Heart right ventricle (tissue), 16 donors: ENCODE measurements at regions of chr10 and their contacts with region 1.

Region 1: DNA sequence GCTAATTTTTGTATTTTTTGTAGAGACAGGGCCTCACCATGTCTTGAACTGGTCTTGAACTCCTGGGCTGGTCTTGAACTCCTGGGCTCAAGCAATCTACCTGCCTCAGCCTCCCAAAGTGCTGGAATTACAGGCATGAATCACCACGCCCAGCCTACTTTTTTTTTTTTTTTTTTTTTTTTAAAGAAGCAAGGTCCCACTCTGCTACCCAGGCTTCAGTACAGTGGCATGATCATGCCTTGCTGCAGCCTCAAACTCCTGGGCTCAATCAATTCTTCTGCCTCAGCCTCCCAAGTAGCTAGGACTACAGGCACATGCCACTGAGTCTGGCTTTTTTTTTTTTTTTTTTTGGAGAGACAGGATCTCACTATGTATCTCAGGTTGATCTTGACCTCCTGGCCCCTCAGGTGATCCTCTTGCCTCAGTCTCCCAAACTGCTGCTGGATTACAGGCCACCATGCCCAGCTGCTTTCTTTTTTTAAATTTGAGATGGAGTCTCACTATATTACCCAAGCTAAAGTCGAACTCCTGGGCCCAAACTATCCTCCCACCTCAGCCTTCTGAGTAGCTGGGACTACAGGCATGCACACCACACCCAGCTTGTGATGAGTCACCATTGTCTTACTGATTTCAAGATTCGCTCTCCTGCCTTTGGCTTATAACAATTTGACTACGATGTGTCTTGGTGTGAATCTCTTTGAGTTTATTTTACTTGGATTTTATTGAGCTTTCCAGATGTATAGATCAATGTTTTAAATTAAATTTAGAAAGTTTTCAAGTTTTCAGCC is 9.0 kb downstream of the RPEL1 start:
- DNase-seq: no peak
- ATAC-seq: no peak
- H3K4me3 ChIP-seq: no peak overlapping the region
- H3K27ac ChIP-seq: no peak overlapping the region
- H3K4me1 ChIP-seq: no peaks in the 10 kb centered on the region
- H3K27me3 ChIP-seq: no peaks in the 10 kb centered on the region
- CTCF ChIP-seq: no peak

Region 2: DNA sequence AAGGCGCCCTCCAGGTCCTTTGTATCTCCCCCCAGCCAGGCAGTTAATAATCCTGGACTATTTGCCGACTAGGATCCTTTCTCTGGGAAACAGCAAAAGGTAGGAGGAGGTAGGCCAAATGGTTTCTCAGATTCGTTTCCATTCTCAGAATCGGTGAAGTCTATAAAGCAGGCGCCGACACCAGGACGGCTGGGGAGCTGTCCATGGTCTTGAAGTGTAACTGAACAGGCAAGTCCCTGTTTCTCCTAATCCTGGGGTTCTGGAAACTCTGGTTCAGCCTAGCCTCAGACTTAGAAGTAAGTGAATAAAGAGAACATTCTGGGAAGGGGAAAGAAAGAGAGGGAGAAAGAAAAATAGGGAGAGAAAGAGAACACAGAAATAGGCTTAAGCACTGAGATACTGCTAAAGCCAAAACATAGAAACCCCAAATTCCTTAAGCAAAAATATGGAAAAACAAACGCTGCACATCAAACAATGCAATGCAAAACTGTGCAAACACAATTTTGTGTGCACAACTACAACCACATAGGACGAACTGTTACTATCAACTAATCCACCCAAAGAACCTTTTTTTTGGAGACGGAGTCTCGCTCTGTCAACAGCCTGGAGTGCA is 11.1 kb after region 1 on chr10:
- intact Hi-C with region 1: loop called in 1 of 10 experiments (anchors 1 kb)
- DNase-seq: peak in 1 of 2 donors; percentile 73
- ATAC-seq: no peak
- H3K4me3 ChIP-seq: no peak overlapping the region
- H3K27ac ChIP-seq: no peak overlapping the region
- H3K4me1 ChIP-seq: no peaks in the 10 kb centered on the region
- H3K27me3 ChIP-seq: peaks cover 0 to 70% (median 37%) of the 10 kb centered on the region in 7 donors
- CTCF ChIP-seq: no peak